ENCODE measurements at regions of chr11 and their contacts with region 1.

Region 1: GRCh38 chr11:60265373-60266214 is 14.9 kb upstream of the MS4A4A start:
- DNase-seq: peak; percentile 52 to 62 (median 58)
- ATAC-seq: peak; percentile 76
- H3K4me3 ChIP-seq: no peak overlapping the region
- H3K27ac ChIP-seq: no peak overlapping the region
- H3K4me1 ChIP-seq: no peaks in the 10 kb centered on the region; a peak in 1 of 5 replicates
- H3K27me3 ChIP-seq: peaks cover 0 to 6% of the 10 kb centered on the region in 2 experiments; a peak in 1 of 5 replicates
- CTCF ChIP-seq: peak; percentile 58 to 81 (median 76); a peak in 5 of 6 replicates
- EP300 ChIP-seq: no peak
- POLR2A ChIP-seq: no peak
- RAD21 ChIP-seq: peak; percentile 69 to 82

Region 2: DNA sequence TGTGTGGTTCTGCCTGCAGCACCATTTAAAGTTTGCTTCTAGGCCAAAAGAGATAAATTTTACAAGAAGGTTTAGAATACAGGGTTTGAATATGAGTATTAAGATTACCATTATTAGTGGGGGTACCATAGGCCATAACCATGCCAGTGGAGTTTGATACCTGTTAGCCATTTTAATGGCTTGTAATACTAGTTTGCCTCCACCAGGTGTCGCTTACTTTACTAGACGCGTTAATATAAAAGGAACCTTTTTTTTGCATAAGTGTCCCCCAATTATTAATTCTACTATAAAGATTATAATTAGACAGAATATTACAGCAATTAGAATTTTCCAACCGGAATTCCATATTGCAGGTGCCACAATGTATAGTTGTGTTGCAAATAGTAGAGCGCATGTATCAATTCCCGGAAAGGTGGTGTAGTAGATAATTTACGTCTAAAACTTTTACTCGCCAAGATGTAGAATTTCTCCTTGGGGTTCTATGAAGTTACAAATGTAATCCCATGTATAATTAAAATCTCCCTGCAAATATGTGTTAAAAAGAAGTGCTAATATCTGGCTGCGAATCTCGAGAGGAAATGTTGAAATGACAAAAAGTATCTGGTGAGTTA is 77.6 kb after region 1 on chr11:
- CTCF ChIA-PET with region 1: no interaction called
- POLR2A ChIA-PET with region 1: no interaction called
- in situ Hi-C with region 1: no loop called
- intact Hi-C with region 1: loop called (anchors 5 kb)
- DNase-seq: peak; percentile 23 to 43 (median 35)
- ATAC-seq: 0 out of 3 replicates have a peak, but pooled peaks have one; percentile 33
- H3K4me3 ChIP-seq: no peak overlapping the region
- H3K27ac ChIP-seq: no peak overlapping the region
- H3K4me1 ChIP-seq: no peaks in the 10 kb centered on the region
- H3K27me3 ChIP-seq: no peaks in the 10 kb centered on the region
- CTCF ChIP-seq: peak; percentile 47 to 63 (median 57); a peak in 5 of 6 replicates
- EP300 ChIP-seq: no peak
- POLR2A ChIP-seq: no peak
- RAD21 ChIP-seq: peak in 1 of 2 experiments; percentile 45; a peak in 2 of 4 replicates

Region 3: GRCh38 chr11:60485986-60486385 is 220.4 kb after region 1 on chr11:
- CTCF ChIA-PET with region 1: no interaction called
- POLR2A ChIA-PET with region 1: no interaction called
- in situ Hi-C with region 1: no loop called
- intact Hi-C with region 1: loop called (anchors 5 kb)
- DNase-seq: peak; percentile 57 to 64 (median 62)
- ATAC-seq: peak; percentile 100
- H3K4me3 ChIP-seq: no peak overlapping the region
- H3K27ac ChIP-seq: no peak overlapping the region
- H3K4me1 ChIP-seq: no peaks in the 10 kb centered on the region
- H3K27me3 ChIP-seq: no peaks in the 10 kb centered on the region
- CTCF ChIP-seq: peak; percentile 88 to 99 (median 99)
- EP300 ChIP-seq: no peak
- POLR2A ChIP-seq: no peak
- RAD21 ChIP-seq: peak; percentile 46 to 65

Region 4: DNA sequence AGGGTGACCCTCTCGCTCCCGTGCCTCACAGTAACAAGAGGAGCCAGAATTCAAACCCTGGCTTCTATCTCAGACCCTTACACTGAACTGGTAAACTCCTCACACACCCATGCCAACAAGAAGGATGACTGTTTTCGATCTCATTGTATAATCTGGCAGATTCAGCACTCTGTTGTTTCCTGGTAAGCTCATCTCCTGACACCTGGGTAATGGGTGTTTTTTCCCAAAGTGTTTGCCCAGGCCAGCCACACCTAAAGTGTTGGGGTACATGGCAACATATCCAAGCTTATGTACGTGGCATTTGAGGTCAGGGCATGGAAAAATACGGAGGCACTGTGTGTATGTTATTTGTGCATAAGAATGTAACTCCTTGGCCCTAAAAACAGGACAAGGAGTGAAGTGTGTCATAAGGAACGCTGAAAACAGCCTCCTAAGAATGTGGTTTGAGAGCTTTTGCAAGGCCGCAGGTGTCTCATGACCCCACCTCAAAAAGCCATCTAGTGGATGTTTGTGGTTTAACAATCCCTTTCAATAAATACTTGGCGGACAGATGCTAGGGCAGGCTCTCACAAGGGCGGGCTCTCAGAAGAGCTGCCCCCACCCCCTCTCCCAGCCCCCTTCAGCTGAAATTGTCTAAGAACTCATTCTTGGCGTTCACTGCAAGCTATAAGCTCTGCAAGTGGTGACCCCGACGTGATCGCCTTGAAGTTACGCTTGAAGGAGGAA is 490.9 kb after region 1 on chr11 and contains the start of gene MS4A15:
- CTCF ChIA-PET with region 1: no interaction called
- POLR2A ChIA-PET with region 1: no interaction called
- in situ Hi-C with region 1: no loop called
- intact Hi-C with region 1: loop called (anchors 10 kb)
- DNase-seq: peak; percentile 54 to 66 (median 57)
- ATAC-seq: peak; percentile 86
- H3K4me3 ChIP-seq: no peak within 1 kb of the TSS
- H3K27ac ChIP-seq: no peak within 1 kb of the TSS
- H3K4me1 ChIP-seq: peaks cover 0 to 8% of the 10 kb centered on the region in 2 experiments; a peak in 2 of 5 replicates
- H3K27me3 ChIP-seq: peaks cover 28 to 37% of the 10 kb centered on the region in 2 experiments
- CTCF ChIP-seq: peak; percentile 62 to 65 (median 64)
- EP300 ChIP-seq: no peak
- POLR2A ChIP-seq: no peak
- RAD21 ChIP-seq: peak in 1 of 2 experiments; percentile 45; a peak in 2 of 4 replicates
- polyA plus RNA-seq, gene MS4A15: not detected

Measured in K562 (cell line).